Activated CD4-positive, alpha-beta T cell treated with anti-CD3 and anti-CD28 coated beads for 36 hours (primary cell): ENCODE measurements at regions of chr11 and their contacts with region 1.

Region 1: GRCh38 chr11:62591448-62592145 is at the start of gene TUT1:
- DNase-seq: peak; percentile 97
- ATAC-seq: peak; percentile 93
- H3K4me3 Mint-ChIP-seq: peak within 1 kb of the TSS; percentile 99
- H3K27ac Mint-ChIP-seq: peak within 1 kb of the TSS; percentile 99
- H3K4me1 Mint-ChIP-seq: peaks cover 47% of the 10 kb centered on the region
- H3K27me3 Mint-ChIP-seq: no peaks in the 10 kb centered on the region
- total RNA-seq, gene TUT1: 32.5 to 36.0 TPM

Region 2: GRCh38 chr11:62542750-62543567 is 48.6 kb before region 1 on chr11:
- CTCF ChIA-PET with region 1: interaction called, 11 read pairs
- POLR2A ChIA-PET with region 1: interaction called, 3 read pairs
- intact Hi-C with region 1: no loop called
- DNase-seq: peak; percentile 84
- ATAC-seq: peak; percentile 67
- H3K4me3 Mint-ChIP-seq: peak overlapping the region; percentile 83
- H3K27ac Mint-ChIP-seq: peak overlapping the region; percentile 58
- H3K4me1 Mint-ChIP-seq: peaks cover 80% of the 10 kb centered on the region
- H3K27me3 Mint-ChIP-seq: peaks cover 3% of the 10 kb centered on the region

Region 3: GRCh38 chr11:62621567-62622470 is 30.2 kb after region 1 on chr11 and contains the start of gene B3GAT3:
- CTCF ChIA-PET with region 1: interaction called, 6 read pairs
- POLR2A ChIA-PET with region 1: interaction called, 15 read pairs
- intact Hi-C with region 1: loop called (anchors 1 kb)
- DNase-seq: peak; percentile 97
- ATAC-seq: peak; percentile 94
- H3K4me3 Mint-ChIP-seq: peak within 1 kb of the TSS; percentile 92
- H3K27ac Mint-ChIP-seq: peak within 1 kb of the TSS; percentile 94
- H3K4me1 Mint-ChIP-seq: peaks cover 29% of the 10 kb centered on the region
- H3K27me3 Mint-ChIP-seq: no peaks in the 10 kb centered on the region
- total RNA-seq, gene B3GAT3: 48.7 to 57.5 TPM

Region 4: DNA sequence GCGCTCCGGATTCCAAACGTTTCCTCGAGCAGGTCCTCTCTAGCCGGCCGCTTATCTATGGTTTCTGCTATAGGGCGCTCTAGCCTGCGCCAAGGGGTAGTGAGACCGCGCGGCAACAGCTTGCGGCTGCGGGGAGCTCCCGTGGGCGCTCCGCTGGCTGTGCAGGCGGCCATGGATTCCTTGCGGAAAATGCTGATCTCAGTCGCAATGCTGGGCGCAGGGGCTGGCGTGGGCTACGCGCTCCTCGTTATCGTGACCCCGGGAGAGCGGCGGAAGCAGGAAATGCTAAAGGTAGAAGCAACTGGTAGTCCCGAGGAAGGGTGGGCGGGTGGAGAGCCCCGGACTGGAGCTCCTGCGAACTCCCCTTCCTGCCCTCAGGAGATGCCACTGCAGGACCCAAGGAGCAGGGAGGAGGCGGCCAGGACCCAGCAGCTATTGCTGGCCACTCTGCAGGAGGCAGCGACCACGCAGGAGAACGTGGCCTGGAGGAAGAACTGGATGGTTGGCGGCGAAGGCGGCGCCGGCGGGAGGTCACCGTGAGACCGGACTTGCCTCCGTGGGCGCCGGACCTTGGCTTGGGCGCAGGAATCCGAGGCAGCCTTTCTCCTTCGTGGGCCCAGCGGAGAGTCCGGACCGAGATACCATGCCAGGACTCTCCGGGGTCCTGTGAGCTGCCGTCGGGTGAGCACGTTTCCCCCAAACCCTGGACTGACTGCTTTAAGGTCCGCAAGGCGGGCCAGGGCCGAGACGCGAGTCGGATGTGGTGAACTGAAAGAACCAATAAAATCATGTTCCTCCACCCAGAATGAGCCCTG is 80.2 kb after region 1 on chr11 and contains the starts of genes LBHD1 and UQCC3:
- CTCF ChIA-PET with region 1: interaction called, 6 read pairs
- POLR2A ChIA-PET with region 1: interaction called, 23 read pairs
- intact Hi-C with region 1: loop called in 1 of 2 experiments (anchors 1 kb)
- DNase-seq: peak; percentile 86
- ATAC-seq: peak; percentile 88
- H3K4me3 Mint-ChIP-seq: peak within 1 kb of the TSS; percentile 91
- H3K27ac Mint-ChIP-seq: peak within 1 kb of the TSS; percentile 96
- H3K4me1 Mint-ChIP-seq: peaks cover 54% of the 10 kb centered on the region
- H3K27me3 Mint-ChIP-seq: no peaks in the 10 kb centered on the region
- total RNA-seq, gene LBHD1: 11.9 to 15.5 TPM
- total RNA-seq, gene UQCC3: 4.1 to 6.4 TPM

Region 5: DNA sequence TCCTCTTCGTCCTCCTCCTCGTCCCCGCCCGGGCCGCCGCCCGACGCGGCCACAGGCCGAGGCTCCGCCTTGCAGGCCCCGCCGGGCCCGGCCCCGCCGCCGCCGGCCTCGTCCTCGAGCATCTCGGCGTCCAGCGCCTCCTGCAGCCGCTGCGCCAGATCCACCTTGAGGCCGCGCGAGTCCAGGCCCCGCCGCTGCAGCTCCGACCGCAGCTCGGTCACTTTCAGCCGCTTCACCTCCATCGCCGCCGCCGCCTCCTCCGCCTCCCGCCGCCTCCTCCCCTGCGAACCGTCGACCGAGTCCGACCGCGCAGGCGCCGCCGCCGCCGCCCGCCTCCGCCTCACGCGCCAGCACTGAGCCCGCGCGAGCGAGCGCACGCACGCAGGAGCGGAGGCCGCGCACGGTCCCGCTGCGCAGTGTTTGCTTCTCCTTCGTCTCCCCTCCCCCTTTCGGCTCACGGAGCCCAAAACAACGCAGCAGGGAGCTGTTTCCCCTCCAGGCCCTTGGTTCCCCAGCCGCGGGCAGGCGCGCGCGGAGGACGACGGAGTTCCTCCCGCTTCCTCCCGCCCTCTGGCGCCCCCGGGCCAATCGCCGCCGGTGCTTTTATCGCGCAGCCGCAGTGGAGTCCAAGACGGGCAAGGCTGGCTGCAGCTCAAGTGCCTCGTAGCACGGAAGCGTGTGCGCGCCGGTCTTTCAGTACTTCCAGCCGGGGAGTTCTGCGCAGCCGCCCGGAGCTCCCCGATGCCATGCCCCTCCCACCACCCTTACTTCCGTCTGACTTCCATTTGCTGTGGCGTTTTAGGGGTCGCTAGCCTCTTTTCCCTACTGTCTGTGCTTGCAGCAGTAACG is 135.5 kb after region 1 on chr11 and contains the start of gene HNRNPUL2:
- CTCF ChIA-PET with region 1: interaction called, 4 read pairs
- POLR2A ChIA-PET with region 1: interaction called, 19 read pairs
- intact Hi-C with region 1: loop called in 1 of 2 experiments (anchors 1 kb)
- DNase-seq: peak; percentile 99
- ATAC-seq: peak; percentile 89
- H3K4me3 Mint-ChIP-seq: peak within 1 kb of the TSS; percentile 87
- H3K27ac Mint-ChIP-seq: peak within 1 kb of the TSS; percentile 97
- H3K4me1 Mint-ChIP-seq: peaks cover 41% of the 10 kb centered on the region
- H3K27me3 Mint-ChIP-seq: no peaks in the 10 kb centered on the region
- total RNA-seq, gene HNRNPUL2: 48.7 to 59.6 TPM

Region 6: GRCh38 chr11:62841361-62842184 is 250.0 kb after region 1 on chr11:
- CTCF ChIA-PET with region 1: no interaction called
- POLR2A ChIA-PET with region 1: interaction called, 39 read pairs
- intact Hi-C with region 1: loop called in 1 of 2 experiments (anchors 2 kb)
- DNase-seq: peak; percentile 86
- ATAC-seq: peak; percentile 67
- H3K4me3 Mint-ChIP-seq: no peak overlapping the region
- H3K27ac Mint-ChIP-seq: no peak overlapping the region
- H3K4me1 Mint-ChIP-seq: peaks cover 24% of the 10 kb centered on the region
- H3K27me3 Mint-ChIP-seq: no peaks in the 10 kb centered on the region